ENCODE measurements at regions of chr9 and their contacts with region 1.

Region 1: DNA sequence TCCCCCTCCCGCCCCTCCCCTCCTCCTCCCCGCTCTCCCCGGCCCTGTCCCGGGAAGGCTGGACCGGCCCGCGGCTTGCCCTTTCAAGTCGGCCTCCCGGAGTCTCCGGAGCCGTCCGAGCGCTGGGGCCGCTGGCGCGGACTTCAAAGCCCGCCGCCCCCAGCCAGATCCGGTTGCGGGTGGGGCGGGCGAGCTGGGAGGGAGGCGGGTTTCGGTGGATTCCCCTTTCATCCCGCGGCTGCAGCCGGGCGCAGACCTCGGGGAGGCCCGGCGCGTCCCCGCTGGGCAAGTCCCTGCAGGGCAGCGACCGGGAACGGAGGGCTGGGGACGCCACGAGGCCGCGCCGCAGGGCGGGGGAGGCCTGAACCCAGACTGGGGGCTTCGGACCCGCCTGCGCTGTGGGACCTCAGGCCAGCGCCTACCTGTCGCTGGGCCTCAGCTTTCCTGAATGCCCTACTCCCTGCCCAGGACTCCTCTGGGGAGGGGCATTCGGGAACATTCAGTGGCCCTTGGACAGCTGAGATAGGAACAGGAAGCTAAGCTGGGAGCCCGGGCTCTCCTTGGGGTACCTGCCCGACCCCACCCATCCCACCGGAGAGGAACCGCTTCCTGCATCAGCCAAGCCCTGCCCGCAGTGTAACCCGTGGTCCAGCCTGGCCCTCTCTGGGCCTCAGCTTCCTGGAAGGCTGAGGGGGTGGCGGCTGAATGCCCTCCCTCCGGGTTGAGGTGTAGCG is 23.4 kb downstream of the C9orf50 start:
- DNase-seq: no peak
- H3K4me3 ChIP-seq: peak overlapping the region; percentile 59
- H3K27ac ChIP-seq: peak overlapping the region; percentile 77
- H3K27me3 ChIP-seq: no peaks in the 10 kb centered on the region
- CTCF ChIP-seq: no peak

Region 2: GRCh38 chr9:129524582-129525270 is 72.8 kb before region 1 on chr9:
- CTCF ChIA-PET with region 1: no interaction called
- POLR2A ChIA-PET with region 1: no interaction called
- DNase-seq: no peak
- H3K4me3 ChIP-seq: no peak overlapping the region
- H3K27ac ChIP-seq: no peak overlapping the region
- H3K27me3 ChIP-seq: no peaks in the 10 kb centered on the region
- CTCF ChIP-seq: no peak

Region 3: DNA sequence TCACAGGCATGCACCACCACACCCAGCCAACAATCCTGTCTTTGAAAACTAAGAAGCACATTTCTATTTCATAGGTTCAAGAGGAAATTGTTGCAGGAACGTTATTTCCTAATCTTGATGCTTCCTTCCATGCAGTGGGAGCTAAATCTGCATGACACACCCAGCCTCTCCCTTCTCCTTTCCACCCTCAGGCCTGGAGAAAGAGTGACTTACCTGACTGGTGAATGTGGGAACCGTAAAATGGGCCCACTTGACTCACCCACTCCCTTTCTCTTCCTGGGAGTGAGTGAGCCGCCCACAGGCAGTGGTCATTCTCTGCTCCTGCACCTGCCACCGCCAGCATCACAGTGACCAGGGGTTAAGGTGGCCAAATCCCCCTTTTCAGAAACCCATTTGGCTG is 54.8 kb before region 1 on chr9:
- CTCF ChIA-PET with region 1: no interaction called
- POLR2A ChIA-PET with region 1: no interaction called
- DNase-seq: no peak
- H3K4me3 ChIP-seq: no peak overlapping the region
- H3K27ac ChIP-seq: no peak overlapping the region
- H3K27me3 ChIP-seq: no peaks in the 10 kb centered on the region
- CTCF ChIP-seq: no peak

Region 4: GRCh38 chr9:129569502-129570449 is 27.7 kb before region 1 on chr9:
- CTCF ChIA-PET with region 1: no interaction called
- POLR2A ChIA-PET with region 1: interaction called, 12 read pairs
- DNase-seq: no peak
- H3K4me3 ChIP-seq: no peak overlapping the region
- H3K27ac ChIP-seq: peak overlapping the region; percentile 92
- H3K27me3 ChIP-seq: no peaks in the 10 kb centered on the region
- CTCF ChIP-seq: peak; percentile 49

Region 5: DNA sequence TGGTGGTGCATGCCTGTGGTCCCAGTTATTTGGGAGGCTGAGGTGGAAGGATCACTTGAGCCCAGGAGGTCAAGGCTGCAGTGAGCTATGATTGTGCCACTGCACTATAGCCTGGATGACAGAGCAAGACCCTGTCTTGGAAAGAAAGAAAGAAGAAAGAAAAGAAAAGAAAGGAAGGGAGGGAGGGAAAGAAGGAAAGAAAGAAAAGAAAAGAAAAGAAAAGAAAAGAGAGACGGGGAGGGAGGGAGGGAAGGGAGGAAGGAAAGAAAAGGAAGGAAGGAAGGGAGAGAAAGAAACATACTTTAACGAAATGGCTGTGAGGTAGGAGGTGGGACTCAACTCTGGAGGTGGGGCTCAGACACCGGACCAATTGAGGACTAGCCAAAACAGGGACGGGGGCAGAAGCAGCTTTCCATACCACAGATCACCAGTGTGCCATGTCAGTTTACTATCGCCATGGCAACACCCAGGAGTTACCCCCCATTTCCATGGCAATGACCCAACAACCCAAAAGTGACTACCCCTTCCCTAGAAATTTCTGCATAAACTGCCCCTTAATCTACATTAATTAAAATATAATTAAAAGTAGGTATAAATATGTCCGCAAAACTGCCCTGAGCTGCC is 134.1 kb after region 1 on chr9:
- CTCF ChIA-PET with region 1: no interaction called
- POLR2A ChIA-PET with region 1: no interaction called
- DNase-seq: no peak
- H3K4me3 ChIP-seq: no peak overlapping the region
- H3K27ac ChIP-seq: no peak overlapping the region
- H3K27me3 ChIP-seq: no peaks in the 10 kb centered on the region
- CTCF ChIP-seq: no peak

Measured in AG04450 (cell line).